SK-N-SH (cell line): ENCODE measurements at regions of chr16 and their contacts with region 1.

Region 1: GRCh38 chr16:6682142-6682811 is 650.4 kb upstream of the RBFOX1 start:
- DNase-seq: peak; percentile 53
- H3K4me3 ChIP-seq: no peak overlapping the region
- H3K27ac ChIP-seq: no peak overlapping the region
- H3K4me1 ChIP-seq: no peaks in the 10 kb centered on the region
- H3K27me3 ChIP-seq: no peaks in the 10 kb centered on the region
- CTCF ChIP-seq: peak; percentile 46
- EP300 ChIP-seq: no peak
- RAD21 ChIP-seq: no peak

Region 2: DNA sequence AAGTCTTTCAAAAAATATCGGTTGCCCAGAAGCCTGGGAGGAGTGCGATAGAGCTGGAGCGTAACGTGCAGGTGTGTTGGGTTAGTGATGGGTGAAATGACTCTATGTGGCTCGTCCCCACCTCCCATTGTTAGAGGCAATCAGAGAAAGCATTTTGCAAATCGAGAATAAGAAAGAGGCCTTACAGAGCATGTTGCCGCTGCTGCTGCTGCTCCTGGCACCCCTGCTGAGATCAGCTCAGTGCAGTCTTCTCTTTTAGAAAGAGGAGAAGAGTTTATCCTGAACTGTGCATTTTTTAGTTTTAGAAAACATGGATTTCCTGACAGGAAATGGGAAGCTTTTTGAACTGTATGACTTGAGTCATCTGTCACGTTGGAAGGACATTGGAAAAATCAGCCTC is 124.2 kb before region 1 on chr16:
- CTCF ChIA-PET with region 1: no interaction called
- POLR2A ChIA-PET with region 1: no interaction called
- DNase-seq: no peak
- H3K4me3 ChIP-seq: no peak overlapping the region
- H3K27ac ChIP-seq: no peak overlapping the region
- H3K4me1 ChIP-seq: no peaks in the 10 kb centered on the region
- H3K27me3 ChIP-seq: no peaks in the 10 kb centered on the region
- CTCF ChIP-seq: no peak
- EP300 ChIP-seq: no peak
- RAD21 ChIP-seq: no peak

Region 3: GRCh38 chr16:6663668-6664067 is 18.6 kb before region 1 on chr16:
- CTCF ChIA-PET with region 1: interaction called, 22 read pairs
- POLR2A ChIA-PET with region 1: no interaction called
- DNase-seq: no peak
- H3K4me3 ChIP-seq: no peak overlapping the region
- H3K27ac ChIP-seq: no peak overlapping the region
- H3K4me1 ChIP-seq: no peaks in the 10 kb centered on the region
- H3K27me3 ChIP-seq: no peaks in the 10 kb centered on the region
- CTCF ChIP-seq: no peak
- EP300 ChIP-seq: no peak
- RAD21 ChIP-seq: no peak

Region 4: DNA sequence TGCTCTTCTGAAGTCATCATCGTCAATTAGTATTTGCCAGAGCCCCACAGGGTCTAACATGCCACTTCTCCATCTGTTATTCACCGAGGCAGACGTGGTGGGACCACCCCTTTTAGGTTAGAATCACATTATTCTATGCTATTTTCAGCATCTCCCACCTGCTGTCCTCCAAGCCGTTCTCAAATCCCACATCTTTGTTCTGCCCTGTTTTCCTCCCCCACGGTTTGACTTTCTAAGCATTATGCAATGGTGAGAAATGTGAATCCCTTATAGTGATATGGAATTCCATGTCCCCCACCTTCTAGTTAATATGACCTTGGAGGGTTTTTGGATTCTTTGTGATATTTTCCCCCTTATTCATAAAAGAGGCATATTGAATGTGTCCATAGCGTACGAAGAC is 16.3 kb after region 1 on chr16:
- CTCF ChIA-PET with region 1: interaction called, 26 read pairs
- POLR2A ChIA-PET with region 1: no interaction called
- DNase-seq: no peak
- H3K4me3 ChIP-seq: no peak overlapping the region
- H3K27ac ChIP-seq: no peak overlapping the region
- H3K4me1 ChIP-seq: no peaks in the 10 kb centered on the region
- H3K27me3 ChIP-seq: no peaks in the 10 kb centered on the region
- CTCF ChIP-seq: no peak
- EP300 ChIP-seq: no peak
- RAD21 ChIP-seq: no peak

Region 5: DNA sequence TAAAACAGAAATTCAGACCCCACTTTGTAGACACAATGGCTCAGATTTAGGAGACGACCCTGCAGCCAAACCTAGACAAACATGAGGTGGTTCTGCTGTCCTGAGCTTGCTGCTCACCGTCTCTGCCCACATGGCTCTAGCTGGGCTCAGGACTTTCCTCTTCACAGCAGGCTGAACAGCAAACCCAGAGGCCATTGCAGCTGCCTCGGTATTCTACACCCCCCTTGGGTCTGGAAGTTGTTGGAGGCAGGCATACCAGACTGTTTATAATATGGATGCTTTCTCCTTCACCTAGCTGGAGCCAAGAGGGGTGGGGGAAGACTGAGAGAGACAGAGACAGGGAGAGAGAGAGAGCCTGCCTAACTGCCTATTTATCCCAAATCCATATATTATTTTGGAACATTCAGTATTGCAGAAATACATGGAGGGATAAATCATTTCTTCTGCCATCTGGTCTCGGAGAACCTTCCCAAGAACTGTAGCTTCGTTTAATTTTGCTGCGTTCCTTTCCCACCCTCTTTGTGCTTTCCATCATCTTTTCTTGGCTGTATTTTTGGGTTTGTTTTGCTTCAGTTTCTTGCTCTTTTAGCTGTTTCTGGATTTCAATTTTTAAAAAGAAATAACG is 22.1 kb after region 1 on chr16:
- CTCF ChIA-PET with region 1: interaction called, 26 read pairs
- POLR2A ChIA-PET with region 1: no interaction called
- DNase-seq: no peak
- H3K4me3 ChIP-seq: no peak overlapping the region
- H3K27ac ChIP-seq: no peak overlapping the region
- H3K4me1 ChIP-seq: no peaks in the 10 kb centered on the region
- H3K27me3 ChIP-seq: no peaks in the 10 kb centered on the region
- CTCF ChIP-seq: no peak
- EP300 ChIP-seq: no peak
- RAD21 ChIP-seq: no peak

Region 6: GRCh38 chr16:8173111-8173644 is 1490.9 kb after region 1 on chr16:
- CTCF ChIA-PET with region 1: interaction called, 10 read pairs
- POLR2A ChIA-PET with region 1: no interaction called
- DNase-seq: peak; percentile 67
- H3K4me3 ChIP-seq: no peak overlapping the region
- H3K27ac ChIP-seq: no peak overlapping the region
- H3K4me1 ChIP-seq: no peaks in the 10 kb centered on the region
- H3K27me3 ChIP-seq: no peaks in the 10 kb centered on the region
- CTCF ChIP-seq: peak; percentile 66
- EP300 ChIP-seq: no peak
- RAD21 ChIP-seq: peak; percentile 80